ENCODE measurements at regions of chr22 and their contacts with region 1.

Region 1: GRCh38 chr22:31080848-31081649 is at the start of gene SMTN:
- DNase-seq: peak; percentile 75 to 94 (median 90)
- ATAC-seq: peak; percentile 72
- H3K4me3 ChIP-seq: peak within 1 kb of the TSS; percentile 73 to 81
- H3K4me3 Mint-ChIP-seq: peak within 1 kb of the TSS; percentile 88
- H3K27ac ChIP-seq: no peak within 1 kb of the TSS
- H3K27ac Mint-ChIP-seq: peak within 1 kb of the TSS; percentile 37
- H3K4me1 ChIP-seq: peaks cover 32% of the 10 kb centered on the region
- H3K4me1 Mint-ChIP-seq: peaks cover 36% of the 10 kb centered on the region
- H3K27me3 ChIP-seq: no peaks in the 10 kb centered on the region
- H3K27me3 Mint-ChIP-seq: no peaks in the 10 kb centered on the region
- CTCF ChIP-seq: no peak
- total RNA-seq, gene SMTN: 4.0 to 4.9 TPM

Region 2: DNA sequence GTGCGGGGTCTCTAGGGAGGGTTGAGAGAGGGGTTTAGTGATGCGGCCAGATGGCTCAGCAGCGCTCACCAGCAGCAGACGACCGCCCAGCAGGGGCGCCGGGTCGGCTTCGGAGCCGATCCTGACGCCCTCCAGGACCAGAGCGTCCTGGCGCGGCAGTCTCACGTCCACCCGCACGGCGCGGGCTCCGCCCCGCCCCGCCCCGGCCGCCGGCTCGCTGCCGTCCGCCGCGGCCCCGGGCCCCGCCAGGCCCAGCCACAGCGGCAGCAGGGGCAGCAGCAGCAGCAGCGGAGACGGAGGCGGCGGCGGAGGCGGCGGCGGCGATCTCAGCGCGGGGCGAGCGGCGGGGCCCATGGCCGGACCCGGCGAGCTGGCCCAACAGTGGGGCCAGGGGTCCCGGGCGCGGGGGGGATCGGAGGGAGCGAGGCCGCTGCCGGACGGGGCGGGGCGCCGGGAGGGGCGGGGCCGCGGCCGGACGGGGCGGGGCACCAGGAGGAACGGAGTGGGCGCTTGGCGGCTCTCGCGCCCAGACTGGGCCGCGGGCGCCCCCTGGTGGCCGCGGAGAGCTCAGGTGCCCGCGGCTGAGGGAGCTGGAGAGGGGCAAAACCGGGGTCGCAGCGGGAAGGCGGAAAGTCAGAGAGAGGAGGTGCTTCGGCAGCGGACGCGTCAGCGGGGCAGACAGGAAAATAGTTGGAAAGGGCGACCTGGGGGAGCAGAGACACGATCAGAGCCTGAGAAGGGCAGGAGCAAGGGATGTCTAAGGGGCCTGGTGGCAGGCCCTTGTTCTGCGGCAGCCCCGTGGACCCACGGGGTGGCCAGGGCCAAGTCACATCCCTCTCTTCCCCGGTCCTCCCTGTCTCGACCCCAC is 693.9 kb before region 1 on chr22 and contains the start of gene RNF215:
- CTCF ChIA-PET with region 1: no interaction called
- POLR2A ChIA-PET with region 1: no interaction called
- intact Hi-C with region 1: loop called in 1 of 2 experiments (anchors 5 kb)
- DNase-seq: peak; percentile 60 to 91 (median 75)
- ATAC-seq: peak; percentile 79
- H3K4me3 ChIP-seq: peak within 1 kb of the TSS; percentile 33 to 40
- H3K4me3 Mint-ChIP-seq: peak within 1 kb of the TSS; percentile 85
- H3K27ac ChIP-seq: no peak within 1 kb of the TSS
- H3K27ac Mint-ChIP-seq: peak within 1 kb of the TSS; percentile 82
- H3K4me1 ChIP-seq: peaks cover 16% of the 10 kb centered on the region
- H3K4me1 Mint-ChIP-seq: peaks cover 26% of the 10 kb centered on the region
- H3K27me3 ChIP-seq: peaks cover 0 to 2% of the 10 kb centered on the region in 2 experiments
- H3K27me3 Mint-ChIP-seq: no peaks in the 10 kb centered on the region
- CTCF ChIP-seq: peak; percentile 87
- total RNA-seq, gene RNF215: 7.0 to 7.4 TPM

Region 3: DNA sequence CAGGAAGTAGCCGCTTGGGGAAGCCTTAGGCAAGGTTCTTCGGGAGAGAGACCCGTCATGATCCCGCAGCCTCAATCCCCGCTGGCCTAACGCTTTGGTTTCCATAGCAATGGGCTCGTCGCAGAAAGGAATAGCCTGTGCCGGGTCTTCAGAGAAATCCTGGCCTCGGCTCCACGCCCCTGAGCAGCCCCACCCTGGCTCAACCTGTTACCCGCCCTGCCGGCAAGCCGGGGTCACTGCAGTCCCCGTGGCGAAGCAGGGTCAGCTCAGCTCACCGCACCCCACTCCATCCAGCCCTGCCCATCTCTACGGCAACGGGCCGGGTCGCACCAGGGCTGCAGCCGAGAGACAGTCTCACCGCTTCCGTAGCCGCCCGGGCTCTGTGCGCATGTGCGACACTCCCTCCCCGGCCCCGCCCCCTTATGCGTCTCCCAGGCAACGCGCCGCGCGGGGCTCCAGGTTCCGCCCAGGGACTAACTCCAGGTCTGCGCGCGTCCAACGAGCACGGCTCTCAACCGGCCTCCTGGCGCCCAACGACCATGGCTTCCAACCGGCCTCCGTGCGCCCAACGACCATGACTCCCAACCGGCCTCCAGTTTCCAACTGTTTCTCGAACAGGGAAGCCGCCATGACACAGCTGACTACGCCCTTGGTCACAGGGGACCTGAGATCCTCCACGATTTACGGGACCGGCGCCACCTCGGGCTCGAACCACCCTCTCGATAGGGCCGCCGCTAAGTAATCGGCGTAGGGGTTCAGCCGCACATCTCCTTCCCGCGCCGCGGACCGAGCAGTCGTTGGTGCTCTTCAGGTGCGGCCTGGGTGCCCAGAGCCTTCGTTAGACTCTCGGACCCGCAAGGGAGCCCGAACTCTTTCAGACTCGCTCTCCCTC is 413.3 kb before region 1 on chr22 and contains the start of gene DUSP18:
- CTCF ChIA-PET with region 1: no interaction called
- POLR2A ChIA-PET with region 1: no interaction called
- intact Hi-C with region 1: loop called in 1 of 2 experiments (anchors 10 kb)
- DNase-seq: peak; percentile 88 to 98 (median 95)
- ATAC-seq: peak; percentile 90
- H3K4me3 ChIP-seq: peak within 1 kb of the TSS; percentile 73 to 87
- H3K4me3 Mint-ChIP-seq: peak within 1 kb of the TSS; percentile 96
- H3K27ac ChIP-seq: peak within 1 kb of the TSS; percentile 54 to 72
- H3K27ac Mint-ChIP-seq: peak within 1 kb of the TSS; percentile 94
- H3K4me1 ChIP-seq: peaks cover 11% of the 10 kb centered on the region
- H3K4me1 Mint-ChIP-seq: peaks cover 18% of the 10 kb centered on the region
- H3K27me3 ChIP-seq: no peaks in the 10 kb centered on the region
- H3K27me3 Mint-ChIP-seq: no peaks in the 10 kb centered on the region
- CTCF ChIP-seq: no peak
- total RNA-seq, gene DUSP18: 3.4 to 4.5 TPM

Region 4: DNA sequence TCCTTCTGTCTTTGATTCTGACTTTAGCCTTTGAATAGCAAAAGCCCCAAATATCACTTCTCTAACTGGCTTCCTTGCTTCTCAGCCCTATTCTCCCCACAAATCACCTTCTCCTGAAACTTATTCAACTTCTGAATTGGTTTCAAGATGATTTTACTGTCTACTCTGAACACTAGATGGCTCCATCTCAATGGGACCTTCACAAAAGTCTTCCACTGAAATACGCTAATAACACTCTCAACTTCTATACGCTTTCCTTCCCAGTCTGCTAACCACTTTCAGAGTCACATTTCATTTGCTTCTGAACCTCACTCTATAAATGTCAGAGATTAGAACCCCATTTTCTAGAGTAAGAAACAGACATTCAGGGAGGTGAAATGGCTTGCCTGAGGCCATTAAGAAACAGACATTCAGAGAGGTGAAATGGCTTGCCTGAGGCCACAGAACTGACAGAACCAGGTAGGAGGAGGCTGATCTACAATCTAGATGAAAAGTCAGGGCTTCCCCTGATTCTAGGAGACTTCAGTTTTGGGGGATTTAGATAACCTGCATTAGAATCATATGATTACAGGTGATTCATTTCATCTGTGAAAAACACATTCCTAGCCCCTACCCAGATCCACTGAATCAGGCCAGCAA is 133.1 kb before region 1 on chr22:
- CTCF ChIA-PET with region 1: interaction called, 52 read pairs
- POLR2A ChIA-PET with region 1: interaction called, 4 read pairs
- intact Hi-C with region 1: loop called (anchors 1 kb)
- DNase-seq: peak in 2 of 9 experiments; percentile 52 to 68
- ATAC-seq: peak; percentile 54
- H3K4me3 ChIP-seq: no peak overlapping the region
- H3K4me3 Mint-ChIP-seq: no peak overlapping the region
- H3K27ac ChIP-seq: no peak overlapping the region
- H3K27ac Mint-ChIP-seq: no peak overlapping the region
- H3K4me1 ChIP-seq: peaks cover 58% of the 10 kb centered on the region
- H3K4me1 Mint-ChIP-seq: peaks cover 64% of the 10 kb centered on the region
- H3K27me3 ChIP-seq: no peaks in the 10 kb centered on the region
- H3K27me3 Mint-ChIP-seq: no peaks in the 10 kb centered on the region
- CTCF ChIP-seq: peak; percentile 60

Region 5: GRCh38 chr22:31160328-31160978 is 79.4 kb after region 1 on chr22:
- CTCF ChIA-PET with region 1: interaction called, 3 read pairs
- POLR2A ChIA-PET with region 1: interaction called, 3 read pairs
- intact Hi-C with region 1: loop called (anchors 2 to 5 kb)
- DNase-seq: peak in 6 of 9 experiments; percentile 11 to 55 (median 28)
- ATAC-seq: peak; percentile 34
- H3K4me3 ChIP-seq: peak overlapping the region; percentile 78 to 86
- H3K4me3 Mint-ChIP-seq: peak overlapping the region; percentile 100
- H3K27ac ChIP-seq: peak overlapping the region; percentile 72 to 90
- H3K27ac Mint-ChIP-seq: peak overlapping the region; percentile 98
- H3K4me1 ChIP-seq: peaks cover 26% of the 10 kb centered on the region
- H3K4me1 Mint-ChIP-seq: peaks cover 38% of the 10 kb centered on the region
- H3K27me3 ChIP-seq: no peaks in the 10 kb centered on the region
- H3K27me3 Mint-ChIP-seq: no peaks in the 10 kb centered on the region
- CTCF ChIP-seq: no peak

Region 6: DNA sequence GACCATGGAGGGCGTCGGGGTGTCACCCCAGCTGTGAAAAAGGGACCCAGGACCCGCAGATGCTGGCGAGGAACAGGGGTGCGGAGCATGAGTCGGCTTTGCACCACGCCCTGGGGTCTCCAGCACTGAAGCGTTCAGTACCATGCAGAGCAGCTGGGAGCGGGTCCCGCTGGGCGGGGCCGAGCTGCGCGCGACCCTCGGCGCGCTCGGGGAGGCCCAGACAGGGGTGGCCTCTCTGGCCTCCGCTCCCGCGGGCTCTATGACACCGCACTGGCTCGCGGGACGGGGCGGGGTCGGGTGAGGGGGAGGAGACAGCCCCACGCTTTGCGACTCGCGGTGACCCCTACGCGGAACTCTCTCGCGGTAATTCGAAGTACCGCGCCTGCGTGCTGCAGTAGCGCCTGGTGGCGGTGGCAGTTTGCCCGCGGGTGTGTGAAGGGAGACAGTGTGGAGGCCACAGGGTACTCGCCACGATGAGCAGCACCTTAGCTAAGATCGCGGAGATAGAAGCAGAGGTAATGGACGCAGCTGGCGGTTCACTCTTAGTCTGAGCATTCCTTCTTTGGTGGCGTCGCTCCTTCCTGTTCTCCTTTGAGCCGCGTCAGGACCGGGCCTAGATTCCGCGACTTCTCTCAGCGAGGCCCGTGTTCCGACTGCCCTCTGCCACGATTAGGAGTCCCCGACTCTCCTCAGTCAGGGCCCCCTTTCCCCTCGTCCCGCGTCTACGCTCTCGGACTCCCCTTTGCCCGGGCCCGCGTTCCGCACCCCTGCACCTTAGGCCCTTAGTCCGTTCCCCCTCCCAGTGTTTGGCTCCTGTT is 318.4 kb after region 1 on chr22 and contains the start of gene DRG1:
- CTCF ChIA-PET with region 1: no interaction called
- POLR2A ChIA-PET with region 1: no interaction called
- intact Hi-C with region 1: loop called in 1 of 2 experiments (anchors 10 kb)
- DNase-seq: peak; percentile 91 to 98 (median 97)
- ATAC-seq: peak; percentile 96
- H3K4me3 ChIP-seq: peak within 1 kb of the TSS; percentile 76 to 99
- H3K4me3 Mint-ChIP-seq: peak within 1 kb of the TSS; percentile 95
- H3K27ac ChIP-seq: peak within 1 kb of the TSS; percentile 82 to 87
- H3K27ac Mint-ChIP-seq: peak within 1 kb of the TSS; percentile 96
- H3K4me1 ChIP-seq: peaks cover 13% of the 10 kb centered on the region
- H3K4me1 Mint-ChIP-seq: peaks cover 31% of the 10 kb centered on the region
- H3K27me3 ChIP-seq: no peaks in the 10 kb centered on the region
- H3K27me3 Mint-ChIP-seq: no peaks in the 10 kb centered on the region
- CTCF ChIP-seq: no peak
- total RNA-seq, gene DRG1: 55.9 to 63.3 TPM

Measured in CD8-positive, alpha-beta T cell (primary cell).